ENCODE measurements at regions of chr2 and their contacts with region 1.

Region 1: DNA sequence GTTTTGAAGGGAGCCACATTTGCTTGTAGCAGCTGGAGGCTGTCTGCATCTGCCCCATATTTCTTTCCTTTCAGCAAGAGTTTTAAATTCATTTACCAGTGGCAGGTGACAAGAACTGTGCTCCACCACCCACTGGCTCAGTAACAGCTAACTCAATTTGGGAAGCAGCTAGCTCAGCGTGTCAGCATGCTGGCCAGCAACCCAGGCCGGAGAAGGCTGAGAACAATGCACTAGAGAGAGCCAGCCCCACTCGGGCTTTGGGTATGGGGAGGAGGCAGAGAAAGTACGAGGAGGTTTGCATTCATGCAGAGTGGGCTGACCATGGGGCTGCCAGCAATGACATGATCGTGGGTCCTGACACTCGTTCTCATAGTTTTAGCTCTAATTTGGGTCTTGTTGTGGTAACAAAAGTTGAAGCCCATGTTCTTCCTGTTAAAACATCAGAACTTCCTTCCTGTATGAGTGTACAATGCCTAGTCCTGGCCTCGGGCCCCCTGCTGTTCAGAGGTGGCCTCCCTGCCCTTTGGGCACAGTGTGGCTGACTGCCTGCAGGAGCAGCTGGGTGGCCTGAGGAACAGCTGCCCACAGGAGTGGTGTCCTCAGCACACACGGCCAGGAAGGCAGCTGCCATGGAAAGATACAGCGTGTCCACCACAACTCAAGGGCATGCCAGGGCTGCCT is 23.0 kb downstream of the CDC42EP3 start:
- DNase-seq: peak in 13 of 14 experiments; percentile 17 to 77 (median 43)
- ATAC-seq: peak; percentile 67
- H3K4me3 ChIP-seq: peak overlapping the region; percentile 4
- H3K4me3 Mint-ChIP-seq: peak overlapping the region; percentile 44
- H3K27ac ChIP-seq: peak overlapping the region; percentile 24 to 64
- H3K27ac Mint-ChIP-seq: peak overlapping the region; percentile 79
- H3K4me1 ChIP-seq: peaks cover 82% of the 10 kb centered on the region
- H3K4me1 Mint-ChIP-seq: peaks cover 91% of the 10 kb centered on the region
- H3K27me3 ChIP-seq: no peaks in the 10 kb centered on the region
- H3K27me3 Mint-ChIP-seq: no peaks in the 10 kb centered on the region
- CTCF ChIP-seq: peak; percentile 19

Region 2: DNA sequence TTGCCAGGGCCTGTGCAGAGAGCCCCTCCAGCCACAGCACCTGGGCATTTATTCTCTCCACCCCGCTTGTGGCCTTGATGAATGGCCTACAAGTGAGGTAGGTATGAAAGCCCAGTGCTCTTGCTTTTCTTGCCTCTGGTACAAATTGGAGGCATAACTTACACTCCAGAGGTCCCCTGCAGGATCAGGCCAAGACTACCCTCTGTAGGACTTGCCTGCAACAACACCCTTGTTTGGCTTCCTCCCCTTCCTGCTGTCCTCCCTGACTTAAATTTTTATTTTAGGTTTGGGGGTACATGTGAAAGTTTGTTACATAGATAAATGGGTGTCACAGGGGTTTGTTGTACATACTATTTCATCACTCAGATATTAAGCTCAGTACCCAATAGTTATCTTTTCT is 72.7 kb before region 1 on chr2:
- CTCF ChIA-PET with region 1: no interaction called
- POLR2A ChIA-PET with region 1: no interaction called
- intact Hi-C with region 1: no loop called
- DNase-seq: no peak
- ATAC-seq: no peak
- H3K4me3 ChIP-seq: no peak overlapping the region
- H3K4me3 Mint-ChIP-seq: no peak overlapping the region
- H3K27ac ChIP-seq: no peak overlapping the region
- H3K27ac Mint-ChIP-seq: no peak overlapping the region
- H3K4me1 ChIP-seq: no peaks in the 10 kb centered on the region
- H3K4me1 Mint-ChIP-seq: peaks cover 13% of the 10 kb centered on the region
- H3K27me3 ChIP-seq: no peaks in the 10 kb centered on the region
- H3K27me3 Mint-ChIP-seq: no peaks in the 10 kb centered on the region
- CTCF ChIP-seq: no peak

Region 3: DNA sequence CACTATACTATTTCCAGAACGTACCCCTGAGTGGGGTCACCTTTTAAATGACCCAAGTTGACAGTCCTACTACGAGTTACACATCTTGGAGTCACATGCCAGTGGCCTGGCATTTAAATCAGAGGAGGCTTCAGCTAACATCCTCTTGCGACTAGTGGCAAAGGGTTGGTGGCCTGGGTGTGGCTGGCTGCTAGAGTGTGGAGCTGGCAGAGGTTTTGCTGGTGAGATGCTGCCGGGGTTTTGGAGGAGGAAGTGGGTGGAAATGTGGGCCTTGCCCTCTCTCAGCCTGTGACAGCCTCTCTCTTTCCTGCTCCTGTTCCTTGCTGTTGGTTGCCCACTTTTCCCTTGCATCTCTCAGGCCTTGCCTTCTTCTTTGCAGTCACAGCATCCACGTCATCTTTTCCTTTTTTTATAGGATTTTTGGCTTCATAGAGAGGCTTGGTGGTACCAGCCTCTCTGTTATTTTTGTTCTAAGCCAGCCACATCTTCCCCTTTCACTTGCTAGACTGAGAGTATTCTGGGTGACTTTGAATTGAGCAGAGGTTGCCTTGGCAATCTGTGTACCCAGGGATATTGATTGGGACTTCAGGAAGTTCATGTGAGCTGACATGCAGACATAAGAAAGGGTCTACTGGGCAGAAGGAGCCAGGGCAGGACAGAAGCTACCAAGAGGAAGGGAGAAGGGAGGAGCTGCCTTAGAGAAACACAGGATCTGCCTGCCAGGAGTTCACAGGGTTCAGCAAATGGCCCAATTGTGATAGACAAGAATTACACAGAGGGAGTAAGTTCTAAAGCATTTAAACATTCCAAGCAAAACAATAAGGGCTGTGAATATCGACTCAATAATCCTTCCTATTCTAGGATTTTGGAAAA is 32.4 kb before region 1 on chr2:
- CTCF ChIA-PET with region 1: interaction called, 4 read pairs
- POLR2A ChIA-PET with region 1: interaction called, 13 read pairs
- intact Hi-C with region 1: no loop called
- DNase-seq: peak; percentile 48 to 92 (median 66)
- ATAC-seq: peak; percentile 96
- H3K4me3 ChIP-seq: no peak overlapping the region
- H3K4me3 Mint-ChIP-seq: peak overlapping the region; percentile 32
- H3K27ac ChIP-seq: peak overlapping the region; percentile 48 to 74
- H3K27ac Mint-ChIP-seq: peak overlapping the region; percentile 79
- H3K4me1 ChIP-seq: peaks cover 52% of the 10 kb centered on the region
- H3K4me1 Mint-ChIP-seq: peaks cover 65% of the 10 kb centered on the region
- H3K27me3 ChIP-seq: no peaks in the 10 kb centered on the region
- H3K27me3 Mint-ChIP-seq: no peaks in the 10 kb centered on the region
- CTCF ChIP-seq: no peak

Region 4: GRCh38 chr2:37623971-37624900 is 24.2 kb before region 1 on chr2:
- CTCF ChIA-PET with region 1: no interaction called
- POLR2A ChIA-PET with region 1: interaction called, 17 read pairs
- intact Hi-C with region 1: no loop called
- DNase-seq: peak in 4 of 14 experiments; percentile 34 to 69 (median 62)
- ATAC-seq: peak; percentile 35
- H3K4me3 ChIP-seq: no peak overlapping the region
- H3K4me3 Mint-ChIP-seq: peak overlapping the region; percentile 61
- H3K27ac ChIP-seq: peak overlapping the region; percentile 0 to 71
- H3K27ac Mint-ChIP-seq: peak overlapping the region; percentile 85
- H3K4me1 ChIP-seq: peaks cover 59% of the 10 kb centered on the region
- H3K4me1 Mint-ChIP-seq: peaks cover 70% of the 10 kb centered on the region
- H3K27me3 ChIP-seq: no peaks in the 10 kb centered on the region
- H3K27me3 Mint-ChIP-seq: no peaks in the 10 kb centered on the region
- CTCF ChIP-seq: no peak

Region 5: GRCh38 chr2:37683921-37684780 is 35.7 kb after region 1 on chr2:
- CTCF ChIA-PET with region 1: interaction called, 3 read pairs
- POLR2A ChIA-PET with region 1: interaction called, 10 read pairs
- intact Hi-C with region 1: no loop called
- DNase-seq: peak in 4 of 14 experiments; percentile 41 to 78 (median 66)
- ATAC-seq: peak; percentile 100
- H3K4me3 ChIP-seq: no peak overlapping the region
- H3K4me3 Mint-ChIP-seq: peak overlapping the region; percentile 49
- H3K27ac ChIP-seq: peak overlapping the region in 1 of 2 donors; percentile 35
- H3K27ac Mint-ChIP-seq: peak overlapping the region; percentile 73
- H3K4me1 ChIP-seq: peaks cover 9% of the 10 kb centered on the region
- H3K4me1 Mint-ChIP-seq: peaks cover 33% of the 10 kb centered on the region
- H3K27me3 ChIP-seq: no peaks in the 10 kb centered on the region
- H3K27me3 Mint-ChIP-seq: no peaks in the 10 kb centered on the region
- CTCF ChIP-seq: no peak

Measured in CD4-positive, alpha-beta T cell (primary cell).